Testis (tissue), 5 donors: ENCODE measurements at regions of chr2 and their contacts with region 1.

Region 1: GRCh38 chr2:12728221-12728777 is 11.6 kb downstream of the TRIB2 start:
- DNase-seq: no peak
- H3K4me3 ChIP-seq: no peak overlapping the region
- H3K27ac ChIP-seq: peak overlapping the region; percentile 5 to 96
- H3K4me1 ChIP-seq: peaks cover 79% of the 10 kb centered on the region
- H3K27me3 ChIP-seq: no peaks in the 10 kb centered on the region
- CTCF ChIP-seq: no peak
- POLR2A ChIP-seq: no peak

Region 2: GRCh38 chr2:12931186-12931844 is 203.0 kb after region 1 on chr2:
- intact Hi-C with region 1: loop called (anchors 10 kb)
- DNase-seq: peak; percentile 51
- H3K4me3 ChIP-seq: no peak overlapping the region
- H3K27ac ChIP-seq: peak overlapping the region; percentile 14 to 60
- H3K4me1 ChIP-seq: peaks cover 24% of the 10 kb centered on the region
- H3K27me3 ChIP-seq: no peaks in the 10 kb centered on the region
- CTCF ChIP-seq: peak; percentile 84 to 88 (median 85)
- POLR2A ChIP-seq: no peak

Region 3: DNA sequence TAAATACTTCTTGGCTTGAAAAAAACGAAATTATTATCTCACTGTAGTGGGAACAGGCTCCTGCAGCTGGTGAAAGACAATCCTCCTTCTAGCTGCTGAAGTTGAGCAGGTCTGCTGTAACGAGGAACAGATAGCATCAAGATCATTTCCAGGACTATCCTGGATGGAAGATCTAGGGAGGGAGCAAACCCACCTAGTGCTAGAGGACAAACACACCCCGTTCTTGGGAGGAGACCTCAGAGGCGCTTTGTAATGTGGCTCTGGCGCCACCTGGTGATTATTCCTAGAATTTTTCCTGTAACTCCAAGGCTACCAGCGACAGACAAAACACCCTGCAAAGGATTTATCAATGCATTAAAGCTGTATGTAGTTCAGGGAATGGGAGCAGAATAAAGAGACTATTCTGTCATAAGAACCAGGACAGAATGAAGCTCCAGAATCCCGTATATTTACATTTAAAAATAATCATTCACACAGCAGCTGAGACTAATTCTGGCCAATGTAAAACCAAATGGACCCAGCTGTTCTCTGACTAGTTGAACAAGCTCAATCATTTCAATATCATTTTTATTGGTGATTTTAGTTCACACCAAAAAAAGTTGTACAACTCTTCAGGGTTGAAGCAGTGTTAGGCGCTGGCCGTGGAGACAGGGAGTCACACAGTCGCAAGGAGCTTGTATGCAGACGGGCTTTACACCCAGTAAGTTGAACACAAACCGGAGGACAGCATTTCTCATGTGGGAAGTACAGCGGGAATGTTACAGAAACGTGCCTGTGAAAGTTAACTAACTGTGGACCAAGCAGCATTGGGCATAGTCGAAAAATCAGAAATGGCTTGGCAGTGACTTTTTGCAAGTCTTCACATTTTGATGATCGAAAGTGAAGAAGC is 278.8 kb after region 1 on chr2:
- intact Hi-C with region 1: loop called (anchors 10 kb)
- DNase-seq: peak; percentile 89
- H3K4me3 ChIP-seq: peak overlapping the region in 1 of 2 donors; percentile 6
- H3K27ac ChIP-seq: peak overlapping the region in 1 of 2 donors; percentile 55
- H3K4me1 ChIP-seq: peaks cover 11% of the 10 kb centered on the region
- H3K27me3 ChIP-seq: no peaks in the 10 kb centered on the region
- CTCF ChIP-seq: peak; percentile 83 to 93 (median 91)
- POLR2A ChIP-seq: no peak